Adrenal gland (tissue), 19 donors: ENCODE measurements at regions of chr7 and their contacts with region 1.

Region 1: DNA sequence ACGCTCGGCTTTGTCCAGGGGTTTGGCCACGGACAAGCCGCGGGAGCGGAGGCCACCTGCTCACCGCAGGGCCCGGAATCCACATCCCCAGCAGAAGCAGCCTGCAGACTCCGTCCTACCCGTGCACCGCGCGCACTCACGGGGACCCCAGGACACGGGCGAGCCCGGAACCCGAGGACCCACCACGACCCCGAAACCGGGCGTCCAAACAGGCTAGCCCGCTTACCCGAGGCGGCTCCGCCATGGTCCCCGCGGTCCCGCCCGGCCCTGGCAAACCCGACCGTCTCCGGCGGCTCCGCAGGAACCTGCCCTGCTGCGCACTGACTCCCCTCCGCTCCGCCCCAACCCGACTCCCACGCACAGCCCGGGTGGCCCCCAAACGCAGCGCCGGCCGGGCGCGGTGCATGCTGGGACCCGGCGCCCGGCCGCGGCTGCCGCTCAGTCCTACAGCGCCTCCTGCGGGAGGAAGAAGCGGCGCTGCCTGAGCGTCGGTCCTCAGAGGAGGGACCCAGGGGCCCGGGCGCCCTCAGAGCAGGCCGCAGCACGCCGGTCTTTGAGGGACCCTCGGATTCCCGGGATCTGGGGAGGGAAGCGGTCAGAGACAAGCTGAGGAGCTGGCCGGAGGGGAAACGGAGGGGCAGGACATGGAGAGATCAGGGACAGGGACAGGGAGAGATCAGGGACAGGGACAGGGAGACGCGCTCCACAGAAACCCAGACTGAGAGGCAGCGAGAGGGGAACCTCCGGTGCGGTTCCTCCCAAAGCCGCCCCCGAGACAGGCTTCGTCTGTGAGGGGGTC is at the start of gene ZNF786:
- DNase-seq: peak; percentile 83 to 90 (median 86)
- H3K4me3 ChIP-seq: peak within 1 kb of the TSS; percentile 59 to 98 (median 82)
- H3K27ac ChIP-seq: peak within 1 kb of the TSS; percentile 91 to 97 (median 92)
- H3K4me1 ChIP-seq: peaks cover 4 to 11% of the 10 kb centered on the region in 2 donors
- H3K27me3 ChIP-seq: no peaks in the 10 kb centered on the region
- CTCF ChIP-seq: peak; percentile 71 to 96 (median 92)
- POLR2A ChIP-seq: peak; percentile 77 to 85
- total RNA-seq, gene ZNF786: 4.2 to 13.0 (median 5.3) TPM

Region 2: DNA sequence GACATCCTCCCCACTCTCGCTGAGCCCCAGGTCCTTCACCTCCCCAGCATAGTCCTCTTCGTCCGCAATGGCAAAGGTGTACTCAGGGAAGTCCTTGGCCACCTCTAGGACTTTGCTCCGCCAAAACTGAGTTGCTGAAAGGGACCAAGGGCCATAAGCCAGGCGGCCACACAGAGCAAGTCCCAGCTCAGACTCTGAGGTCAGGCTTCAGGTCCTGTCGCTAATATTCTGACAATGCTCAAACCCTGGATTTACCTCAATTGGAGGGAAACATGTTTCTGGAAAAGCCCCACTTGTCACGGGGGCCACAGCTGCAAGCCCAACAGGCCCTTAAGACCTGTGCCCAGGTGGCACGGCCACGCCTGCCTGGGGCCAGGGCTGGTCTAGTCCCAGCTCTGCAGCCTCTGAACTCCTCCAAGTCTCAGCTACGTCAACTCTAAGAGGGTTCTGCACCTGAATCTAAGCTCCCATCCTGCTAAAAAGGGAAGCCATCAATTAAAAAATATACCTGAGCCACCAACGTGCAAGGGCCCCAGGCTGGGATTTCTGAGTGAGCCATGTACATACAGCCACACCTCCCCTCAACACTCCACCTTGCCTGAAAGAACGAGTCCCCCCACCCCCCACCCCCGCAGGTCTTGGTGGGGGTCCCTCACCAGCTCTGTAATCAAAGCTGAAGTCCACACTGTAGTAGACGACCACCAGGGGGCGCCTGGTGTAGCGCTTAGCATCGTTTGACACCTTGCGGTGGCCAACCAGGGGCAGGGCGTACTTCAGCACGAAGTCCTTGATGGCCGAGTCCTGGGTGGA is 85.2 kb before region 1 on chr7:
- intact Hi-C with region 1: loop called (anchors 5 to 10 kb)
- DNase-seq: peak; percentile 73 to 93 (median 83)
- H3K4me3 ChIP-seq: no peak overlapping the region
- H3K27ac ChIP-seq: no peak overlapping the region
- H3K4me1 ChIP-seq: no peaks in the 10 kb centered on the region
- H3K27me3 ChIP-seq: no peaks in the 10 kb centered on the region
- CTCF ChIP-seq: peak; percentile 80 to 92 (median 87)
- POLR2A ChIP-seq: no peak

Region 3: GRCh38 chr7:149147072-149147751 is 56.6 kb after region 1 on chr7 and contains the start of gene ZNF398:
- intact Hi-C with region 1: loop called in 1 of 2 experiments (anchors 10 kb)
- DNase-seq: peak; percentile 66 to 81 (median 73)
- H3K4me3 ChIP-seq: peak within 1 kb of the TSS; percentile 69 to 83 (median 76)
- H3K27ac ChIP-seq: peak within 1 kb of the TSS; percentile 62 to 97 (median 93)
- H3K4me1 ChIP-seq: peaks cover 3 to 20% of the 10 kb centered on the region in 2 donors
- H3K27me3 ChIP-seq: no peaks in the 10 kb centered on the region
- CTCF ChIP-seq: peak; percentile 12 to 91 (median 66)
- POLR2A ChIP-seq: peak; percentile 71 to 84
- total RNA-seq, gene ZNF398: 7.4 to 18.7 (median 14.1) TPM